GM12878 (cell line): ENCODE measurements at regions of chr1 and their contacts with region 1.

Region 1: GRCh38 chr1:166166695-166167571 is at the start of gene FAM78B:
- DNase-seq: peak; percentile 36
- ATAC-seq: peak; percentile 71
- H3K4me3 ChIP-seq: peak within 1 kb of the TSS; percentile 66
- H3K27ac ChIP-seq: peak within 1 kb of the TSS; percentile 36
- H3K4me1 ChIP-seq: peaks cover 40% of the 10 kb centered on the region
- H3K27me3 ChIP-seq: no peaks in the 10 kb centered on the region; a peak in 1 of 4 replicates
- CTCF ChIP-seq: peak; percentile 4 to 14 (median 5); a peak in 1 of 6 replicates
- EP300 ChIP-seq: no peak
- POLR2A ChIP-seq: no peak
- RAD21 ChIP-seq: no peak
- polyA plus RNA-seq, gene FAM78B: 0.31 to 0.40 TPM

Region 2: GRCh38 chr1:165974598-165975131 is 192.3 kb before region 1 on chr1:
- CTCF ChIA-PET with region 1: no interaction called
- POLR2A ChIA-PET with region 1: no interaction called
- RAD21 ChIA-PET with region 1: no interaction called
- SMC1A ChIA-PET with region 1: no interaction called
- in situ Hi-C with region 1: no loop called
- intact Hi-C with region 1: no loop called
- DNase-seq: no peak
- ATAC-seq: no peak
- H3K4me3 ChIP-seq: no peak overlapping the region
- H3K27ac ChIP-seq: no peak overlapping the region
- H3K4me1 ChIP-seq: no peaks in the 10 kb centered on the region
- H3K27me3 ChIP-seq: no peaks in the 10 kb centered on the region
- CTCF ChIP-seq: no peak
- EP300 ChIP-seq: no peak
- POLR2A ChIP-seq: no peak
- RAD21 ChIP-seq: no peak

Region 3: DNA sequence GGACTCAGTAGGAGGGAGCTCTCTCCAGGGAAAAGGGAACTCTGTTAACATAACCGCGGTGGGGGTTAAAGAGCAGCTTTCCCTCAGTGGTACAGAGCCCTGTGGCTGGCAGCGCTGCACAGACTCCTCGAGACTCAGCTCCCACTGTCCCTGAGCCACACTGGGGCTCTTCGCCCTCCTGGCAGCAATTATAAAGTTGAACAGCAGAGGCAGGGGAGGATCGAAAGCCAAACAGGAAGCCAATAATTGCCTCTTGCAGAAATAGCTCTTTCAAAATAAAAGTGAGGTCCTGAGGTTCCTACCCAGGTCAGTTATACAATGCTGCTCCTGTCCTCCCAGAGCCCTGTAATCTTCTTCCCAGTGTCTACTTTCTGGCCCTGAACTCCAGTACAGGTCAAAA is 77.1 kb before region 1 on chr1:
- CTCF ChIA-PET with region 1: interaction called, 13 read pairs
- POLR2A ChIA-PET with region 1: interaction called, 4 read pairs
- RAD21 ChIA-PET with region 1: interaction called, 10 read pairs
- SMC1A ChIA-PET with region 1: interaction called, 9 read pairs
- in situ Hi-C with region 1: no loop called
- intact Hi-C with region 1: loop called (anchors 5 kb)
- DNase-seq: peak; percentile 19
- ATAC-seq: peak; percentile 79
- H3K4me3 ChIP-seq: no peak overlapping the region
- H3K27ac ChIP-seq: no peak overlapping the region
- H3K4me1 ChIP-seq: peaks cover 8% of the 10 kb centered on the region
- H3K27me3 ChIP-seq: no peaks in the 10 kb centered on the region
- CTCF ChIP-seq: peak; percentile 27 to 40 (median 31); a peak in 4 of 6 replicates
- EP300 ChIP-seq: no peak
- POLR2A ChIP-seq: no peak
- RAD21 ChIP-seq: peak; percentile 51

Region 4: DNA sequence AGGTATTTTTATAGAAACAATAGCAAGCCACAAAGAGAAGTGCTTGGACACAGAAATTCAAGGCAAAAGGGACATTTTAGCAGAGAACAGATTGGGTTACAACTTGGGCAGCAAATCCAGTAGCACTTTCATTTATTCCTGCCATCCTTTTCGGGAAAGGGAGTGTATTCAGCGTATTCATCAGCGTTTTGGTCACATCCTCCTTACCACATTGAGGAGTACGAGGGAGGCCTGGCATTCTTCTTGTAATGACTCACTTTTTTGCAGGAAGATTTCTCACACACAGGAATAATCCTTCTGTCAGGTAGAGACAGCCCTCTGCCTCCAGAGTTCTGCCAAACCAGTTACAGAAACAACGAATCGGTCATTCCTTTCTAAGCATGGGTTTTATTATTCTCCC is 18.0 kb after region 1 on chr1:
- CTCF ChIA-PET with region 1: interaction called, 13 read pairs
- POLR2A ChIA-PET with region 1: interaction called, 10 read pairs
- RAD21 ChIA-PET with region 1: interaction called, 32 read pairs
- SMC1A ChIA-PET with region 1: interaction called, 22 read pairs
- in situ Hi-C with region 1: no loop called
- intact Hi-C with region 1: no loop called
- DNase-seq: no peak
- ATAC-seq: no peak
- H3K4me3 ChIP-seq: no peak overlapping the region
- H3K27ac ChIP-seq: no peak overlapping the region
- H3K4me1 ChIP-seq: no peaks in the 10 kb centered on the region
- H3K27me3 ChIP-seq: no peaks in the 10 kb centered on the region
- CTCF ChIP-seq: no peak
- EP300 ChIP-seq: no peak
- POLR2A ChIP-seq: no peak
- RAD21 ChIP-seq: no peak

Region 5: DNA sequence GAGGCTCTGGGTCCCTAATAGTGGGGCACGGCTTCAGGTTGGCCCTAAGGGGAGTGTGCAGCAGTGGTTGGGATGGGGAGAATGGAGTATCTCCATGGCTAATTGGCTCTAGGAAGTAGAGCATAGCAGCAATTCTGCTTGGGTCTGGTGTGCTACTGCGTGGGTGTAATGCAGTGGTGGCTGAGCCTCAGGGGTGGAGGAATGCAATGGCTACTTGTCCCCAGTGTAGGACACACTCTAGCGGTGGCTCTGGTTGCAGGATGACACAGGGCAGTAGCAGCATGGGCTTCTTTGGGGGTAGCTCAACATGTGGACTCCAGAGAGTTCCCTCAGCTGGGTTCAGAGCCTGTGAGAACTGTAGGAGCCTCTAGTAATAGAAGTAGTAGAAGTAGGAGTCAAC is 91.1 kb after region 1 on chr1:
- CTCF ChIA-PET with region 1: interaction called, 6 read pairs
- POLR2A ChIA-PET with region 1: no interaction called
- RAD21 ChIA-PET with region 1: interaction called, 23 read pairs
- SMC1A ChIA-PET with region 1: interaction called, 9 read pairs
- in situ Hi-C with region 1: no loop called
- intact Hi-C with region 1: no loop called
- DNase-seq: no peak
- ATAC-seq: peak; percentile 88
- H3K4me3 ChIP-seq: no peak overlapping the region
- H3K27ac ChIP-seq: no peak overlapping the region
- H3K4me1 ChIP-seq: no peaks in the 10 kb centered on the region
- H3K27me3 ChIP-seq: no peaks in the 10 kb centered on the region
- CTCF ChIP-seq: peak; percentile 16 to 47 (median 34); a peak in 4 of 6 replicates
- EP300 ChIP-seq: no peak
- POLR2A ChIP-seq: no peak
- RAD21 ChIP-seq: peak; percentile 53

Region 6: GRCh38 chr1:166432655-166433054 is 265.7 kb after region 1 on chr1:
- CTCF ChIA-PET with region 1: interaction called, 6 read pairs
- POLR2A ChIA-PET with region 1: no interaction called
- RAD21 ChIA-PET with region 1: interaction called, 4 read pairs
- SMC1A ChIA-PET with region 1: interaction called, 4 read pairs
- in situ Hi-C with region 1: no loop called
- intact Hi-C with region 1: loop called (anchors 10 kb)
- DNase-seq: no peak
- ATAC-seq: no peak
- H3K4me3 ChIP-seq: no peak overlapping the region
- H3K27ac ChIP-seq: no peak overlapping the region
- H3K4me1 ChIP-seq: no peaks in the 10 kb centered on the region
- H3K27me3 ChIP-seq: no peaks in the 10 kb centered on the region
- CTCF ChIP-seq: no peak
- EP300 ChIP-seq: no peak
- POLR2A ChIP-seq: no peak
- RAD21 ChIP-seq: no peak

Region 7: GRCh38 chr1:166479052-166479631 is 312.2 kb after region 1 on chr1:
- CTCF ChIA-PET with region 1: interaction called, 15 read pairs
- POLR2A ChIA-PET with region 1: no interaction called
- RAD21 ChIA-PET with region 1: interaction called, 5 read pairs
- SMC1A ChIA-PET with region 1: interaction called, 6 read pairs
- in situ Hi-C with region 1: no loop called
- intact Hi-C with region 1: loop called (anchors 10 kb)
- DNase-seq: no peak
- ATAC-seq: peak; percentile 76
- H3K4me3 ChIP-seq: no peak overlapping the region
- H3K27ac ChIP-seq: no peak overlapping the region
- H3K4me1 ChIP-seq: no peaks in the 10 kb centered on the region
- H3K27me3 ChIP-seq: no peaks in the 10 kb centered on the region; a peak in 1 of 4 replicates
- CTCF ChIP-seq: peak; percentile 65 to 81 (median 71)
- EP300 ChIP-seq: no peak
- POLR2A ChIP-seq: no peak
- RAD21 ChIP-seq: peak; percentile 67